B cell (primary cell): ENCODE measurements at regions of chr1 and their contacts with region 1.

Region 1: GRCh38 chr1:202571347-202572339 is 138.6 kb downstream of the SYT2 start:
- DNase-seq: peak; percentile 58
- ATAC-seq: peak; percentile 49
- H3K4me3 ChIP-seq: no peak overlapping the region
- H3K4me3 Mint-ChIP-seq: no peak overlapping the region
- H3K27ac ChIP-seq: no peak overlapping the region
- H3K27ac Mint-ChIP-seq: no peak overlapping the region
- H3K4me1 ChIP-seq: peaks cover under 1 to 5% of the 10 kb centered on the region in 2 donors
- H3K4me1 Mint-ChIP-seq: peaks cover 7% of the 10 kb centered on the region
- H3K27me3 ChIP-seq: no peaks in the 10 kb centered on the region
- H3K27me3 Mint-ChIP-seq: no peaks in the 10 kb centered on the region
- CTCF ChIP-seq: peak; percentile 91

Region 2: GRCh38 chr1:202462342-202463076 is 109.1 kb before region 1 on chr1:
- CTCF ChIA-PET with region 1: interaction called, 27 read pairs
- POLR2A ChIA-PET with region 1: no interaction called
- intact Hi-C with region 1: loop called (anchors 1 kb)
- DNase-seq: no peak
- ATAC-seq: no peak
- H3K4me3 ChIP-seq: no peak overlapping the region
- H3K4me3 Mint-ChIP-seq: no peak overlapping the region
- H3K27ac ChIP-seq: no peak overlapping the region
- H3K27ac Mint-ChIP-seq: no peak overlapping the region
- H3K4me1 ChIP-seq: no peaks in the 10 kb centered on the region
- H3K4me1 Mint-ChIP-seq: no peaks in the 10 kb centered on the region
- H3K27me3 ChIP-seq: no peaks in the 10 kb centered on the region
- H3K27me3 Mint-ChIP-seq: no peaks in the 10 kb centered on the region
- CTCF ChIP-seq: no peak

Region 3: DNA sequence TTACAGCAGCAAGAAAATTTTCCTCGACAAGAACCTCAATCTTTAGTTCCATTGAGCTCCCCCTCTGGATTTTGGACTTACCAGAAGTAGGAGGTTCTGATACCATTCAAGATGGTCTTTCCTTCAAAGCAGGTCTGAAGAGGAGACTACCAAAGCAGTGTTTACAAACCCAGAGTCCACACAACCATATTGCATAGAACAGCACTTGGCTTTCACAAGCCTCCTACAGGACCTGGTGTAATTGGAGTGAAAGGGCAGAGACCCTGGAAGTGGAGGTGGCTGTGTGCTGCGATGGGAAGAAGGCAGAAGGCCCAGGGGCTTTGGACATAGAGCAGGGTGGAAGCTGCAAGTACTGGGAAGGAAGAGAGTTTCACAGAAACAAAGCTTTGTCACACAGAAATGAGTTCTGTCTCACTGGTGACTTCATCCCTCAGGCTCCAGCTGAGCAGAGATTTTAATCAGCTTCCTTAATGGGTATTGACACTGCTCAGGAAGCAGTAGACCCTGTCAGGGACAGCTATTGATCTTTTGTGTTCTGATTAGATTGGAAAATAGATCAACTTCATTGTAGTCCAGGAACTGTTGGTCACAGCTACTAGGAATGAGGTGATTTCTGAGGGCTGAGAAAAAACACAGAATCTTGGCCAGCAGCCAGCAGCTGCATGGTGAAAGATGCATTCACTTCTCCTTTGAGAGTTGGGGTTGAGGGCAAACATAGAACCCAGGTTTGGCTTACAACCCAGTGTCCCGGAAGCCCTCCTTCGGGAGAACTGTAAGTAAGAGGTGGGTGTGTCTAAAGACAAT is 14.6 kb after region 1 on chr1:
- CTCF ChIA-PET with region 1: interaction called, 10 read pairs
- POLR2A ChIA-PET with region 1: no interaction called
- intact Hi-C with region 1: no loop called
- DNase-seq: peak; percentile 60
- ATAC-seq: peak; percentile 24
- H3K4me3 ChIP-seq: no peak overlapping the region
- H3K4me3 Mint-ChIP-seq: no peak overlapping the region
- H3K27ac ChIP-seq: no peak overlapping the region
- H3K27ac Mint-ChIP-seq: no peak overlapping the region
- H3K4me1 ChIP-seq: peaks cover 15 to 21% of the 10 kb centered on the region in 2 donors
- H3K4me1 Mint-ChIP-seq: peaks cover 30% of the 10 kb centered on the region
- H3K27me3 ChIP-seq: no peaks in the 10 kb centered on the region
- H3K27me3 Mint-ChIP-seq: no peaks in the 10 kb centered on the region
- CTCF ChIP-seq: no peak

Region 4: GRCh38 chr1:202791077-202791747 is 219.6 kb after region 1 on chr1:
- CTCF ChIA-PET with region 1: no interaction called
- POLR2A ChIA-PET with region 1: no interaction called
- intact Hi-C with region 1: no loop called
- DNase-seq: no peak
- ATAC-seq: no peak
- H3K4me3 ChIP-seq: no peak overlapping the region
- H3K4me3 Mint-ChIP-seq: no peak overlapping the region
- H3K27ac ChIP-seq: no peak overlapping the region
- H3K27ac Mint-ChIP-seq: no peak overlapping the region
- H3K4me1 ChIP-seq: peaks cover 8 to 13% of the 10 kb centered on the region in 2 donors
- H3K4me1 Mint-ChIP-seq: peaks cover 37% of the 10 kb centered on the region
- H3K27me3 ChIP-seq: no peaks in the 10 kb centered on the region
- H3K27me3 Mint-ChIP-seq: no peaks in the 10 kb centered on the region
- CTCF ChIP-seq: no peak